ENCODE measurements at regions of chr6 and their contacts with region 1.

Region 1: DNA sequence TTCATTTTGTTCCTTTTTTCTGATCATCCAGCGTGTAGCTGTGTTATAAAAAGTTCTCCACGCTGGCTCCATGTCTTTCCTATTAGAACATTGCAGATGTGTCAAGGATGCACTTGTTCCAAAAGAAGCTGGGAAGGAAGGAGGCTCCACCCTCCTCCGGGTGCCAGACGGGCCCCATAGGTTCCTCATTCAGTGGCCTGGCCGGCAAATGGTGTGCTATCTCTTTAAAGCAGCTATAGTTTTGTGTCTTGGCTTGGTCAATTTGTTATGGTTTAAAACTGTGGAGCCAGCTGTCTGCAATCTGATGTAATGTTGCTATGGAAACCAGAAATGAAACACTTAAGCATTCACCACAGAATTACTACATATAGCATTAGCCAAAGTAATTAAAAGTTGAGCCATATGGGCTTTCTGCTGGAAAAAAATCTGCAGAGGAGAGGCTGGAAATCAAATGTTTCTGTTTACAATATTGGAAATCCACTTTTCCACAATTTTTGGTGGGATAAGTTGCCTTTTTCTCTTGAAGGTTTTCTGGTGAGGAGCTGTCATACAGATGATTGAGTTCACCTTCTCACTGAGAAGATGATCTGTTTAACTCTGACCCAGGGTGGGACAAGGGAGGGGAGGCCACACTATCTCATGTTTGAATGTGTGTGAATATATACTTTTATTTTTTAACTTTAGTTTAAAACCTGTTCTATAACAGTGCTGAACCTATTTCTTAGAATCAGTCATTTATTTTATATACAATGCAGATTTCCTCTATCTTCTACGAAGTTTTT is 167.4 kb downstream of the SASH1 start:
- DNase-seq: peak; percentile 80
- ATAC-seq: peak; percentile 70

Region 2: DNA sequence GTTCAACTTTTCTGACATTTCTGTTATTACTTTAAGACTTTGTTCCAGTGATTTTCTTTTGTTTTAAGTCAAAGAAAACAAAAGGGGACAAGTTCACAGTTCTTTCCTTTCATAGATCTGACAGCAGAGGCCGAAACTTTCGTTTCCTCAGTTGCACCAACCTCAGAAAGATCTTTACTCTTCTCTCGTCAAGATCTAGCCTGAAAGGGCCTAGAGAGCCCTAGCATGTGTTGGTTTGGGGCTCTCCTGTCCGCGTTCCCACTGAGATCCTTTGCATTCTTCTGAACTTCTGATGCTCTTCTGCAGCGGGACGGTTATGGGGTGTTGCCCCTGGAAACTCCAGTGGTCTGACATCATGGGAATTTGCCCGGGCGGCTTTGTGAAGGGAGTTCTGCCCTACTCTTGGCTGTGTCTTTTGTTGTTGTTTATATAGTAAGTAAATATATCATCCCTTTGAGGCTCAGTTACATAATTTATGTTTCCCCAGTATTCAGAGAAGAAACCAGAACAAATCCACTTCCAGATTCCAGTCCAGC is 38.3 kb before region 1 on chr6:
- intact Hi-C with region 1: loop called (anchors 5 kb)
- DNase-seq: no peak
- ATAC-seq: peak; percentile 35

Measured in Right ventricle myocardium inferior (tissue), 1 donor.